ENCODE measurements at regions of chr10 and their contacts with region 1.

Region 1: DNA sequence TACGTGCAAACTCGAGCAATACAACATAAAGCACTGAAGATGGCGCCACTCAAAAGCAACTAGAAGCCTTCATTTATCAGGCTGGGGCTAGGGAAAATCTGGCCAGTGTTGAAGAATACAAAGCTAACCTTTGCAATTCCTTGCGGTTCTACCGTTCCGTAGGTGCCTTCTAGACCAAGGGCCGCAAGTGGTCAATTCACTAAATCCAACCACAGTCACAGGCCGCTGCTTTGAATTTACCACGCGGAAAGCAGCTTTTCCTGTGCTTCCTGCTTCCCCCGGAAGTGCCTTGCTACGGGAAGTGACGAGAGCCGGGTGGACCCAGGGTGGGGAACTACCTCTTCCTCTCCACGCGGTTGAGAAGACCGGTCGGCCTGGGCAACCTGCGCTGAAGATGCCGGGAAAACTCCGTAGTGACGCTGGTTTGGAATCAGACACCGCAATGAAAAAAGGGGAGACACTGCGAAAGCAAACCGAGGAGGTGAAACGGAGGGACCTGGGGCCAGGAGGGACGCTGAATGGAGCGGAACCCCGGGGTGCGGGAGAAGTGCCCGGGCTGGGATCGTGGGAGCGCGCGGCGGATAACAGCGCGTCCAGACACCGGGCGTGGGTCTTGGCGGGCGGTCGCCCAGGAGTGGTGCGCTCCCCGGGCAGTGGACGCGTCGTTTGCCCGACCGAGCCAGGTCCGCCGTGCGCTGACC is at the start of gene DDX21:
- DNase-seq: peak; percentile 42
- H3K4me3 ChIP-seq: peak within 1 kb of the TSS; percentile 97
- CTCF ChIP-seq: peak; percentile 54

Region 2: DNA sequence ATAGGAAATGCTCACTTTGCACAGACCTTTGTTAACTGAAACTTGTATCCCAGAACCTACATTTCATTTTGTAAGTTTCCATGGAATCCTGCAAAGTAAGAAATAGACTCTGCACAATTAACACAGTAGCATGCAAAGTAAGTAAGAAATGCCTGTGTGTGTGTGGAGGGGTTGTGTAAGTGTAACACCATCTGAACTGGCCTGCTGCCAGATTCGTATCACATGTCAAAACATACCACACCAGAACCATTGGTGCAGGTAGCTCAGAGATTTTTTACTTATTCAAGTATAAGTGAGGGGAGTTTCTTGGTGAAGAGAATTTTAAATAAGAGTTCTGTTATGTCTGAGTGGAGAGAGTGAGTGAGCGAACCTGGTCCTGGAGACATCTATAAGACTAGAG is 17.9 kb before region 1 on chr10:
- CTCF ChIA-PET with region 1: interaction called, 10 read pairs
- POLR2A ChIA-PET with region 1: no interaction called
- DNase-seq: no peak
- H3K4me3 ChIP-seq: no peak overlapping the region
- CTCF ChIP-seq: no peak

Region 3: DNA sequence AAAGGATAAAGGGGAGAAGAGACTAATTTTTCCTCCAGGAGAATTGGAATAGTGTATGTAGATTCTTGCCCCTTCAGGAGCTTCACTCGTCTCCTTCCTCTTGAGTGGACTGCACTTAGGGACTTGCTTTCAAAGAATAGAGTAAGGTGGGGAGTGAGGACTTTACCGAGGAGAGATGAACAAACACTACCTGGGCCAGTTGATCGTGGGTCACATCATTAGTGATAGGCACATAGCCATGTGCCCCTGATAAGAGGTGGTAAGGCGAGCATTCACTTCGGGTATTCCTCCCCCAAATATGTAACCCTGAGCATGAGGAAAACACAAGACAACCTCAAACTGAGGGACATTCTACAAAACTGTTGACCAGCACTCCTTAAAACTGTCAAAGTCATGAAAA is 18.0 kb after region 1 on chr10:
- CTCF ChIA-PET with region 1: interaction called, 13 read pairs
- POLR2A ChIA-PET with region 1: no interaction called
- DNase-seq: no peak
- H3K4me3 ChIP-seq: no peak overlapping the region
- CTCF ChIP-seq: no peak

Region 4: GRCh38 chr10:69033256-69033655 is 77.3 kb after region 1 on chr10:
- CTCF ChIA-PET with region 1: no interaction called
- POLR2A ChIA-PET with region 1: no interaction called
- DNase-seq: no peak
- H3K4me3 ChIP-seq: no peak overlapping the region
- CTCF ChIP-seq: no peak

Region 5: GRCh38 chr10:70096705-70097420 is 1140.9 kb after region 1 on chr10:
- CTCF ChIA-PET with region 1: no interaction called
- POLR2A ChIA-PET with region 1: no interaction called
- DNase-seq: no peak
- H3K4me3 ChIP-seq: no peak overlapping the region
- CTCF ChIP-seq: no peak